Activated T-helper 1 cell treated with anti-CD3 and anti-CD28 coated beads, Interleukin-12 subunit alpha, Interleukin-12 subunit beta, Interleukin-2, Interleukin-4 antibody, amounts not matched to agents 30 ng/mL and 10 ng/mL and 1 ng/mL, durations not matched to agents 14 hours and 24 hours and 36 hours (primary cell): ENCODE measurements at regions of chr5 and their contacts with region 1.

Region 1: GRCh38 chr5:143824851-143825720 is 13.1 kb downstream of the HMHB1 start:
- DNase-seq: peak; percentile 73
- H3K4me3 Mint-ChIP-seq: no peak overlapping the region
- H3K27ac Mint-ChIP-seq: no peak overlapping the region
- H3K4me1 Mint-ChIP-seq: peaks cover 14% of the 10 kb centered on the region
- H3K27me3 Mint-ChIP-seq: peaks cover 1% of the 10 kb centered on the region

Region 2: DNA sequence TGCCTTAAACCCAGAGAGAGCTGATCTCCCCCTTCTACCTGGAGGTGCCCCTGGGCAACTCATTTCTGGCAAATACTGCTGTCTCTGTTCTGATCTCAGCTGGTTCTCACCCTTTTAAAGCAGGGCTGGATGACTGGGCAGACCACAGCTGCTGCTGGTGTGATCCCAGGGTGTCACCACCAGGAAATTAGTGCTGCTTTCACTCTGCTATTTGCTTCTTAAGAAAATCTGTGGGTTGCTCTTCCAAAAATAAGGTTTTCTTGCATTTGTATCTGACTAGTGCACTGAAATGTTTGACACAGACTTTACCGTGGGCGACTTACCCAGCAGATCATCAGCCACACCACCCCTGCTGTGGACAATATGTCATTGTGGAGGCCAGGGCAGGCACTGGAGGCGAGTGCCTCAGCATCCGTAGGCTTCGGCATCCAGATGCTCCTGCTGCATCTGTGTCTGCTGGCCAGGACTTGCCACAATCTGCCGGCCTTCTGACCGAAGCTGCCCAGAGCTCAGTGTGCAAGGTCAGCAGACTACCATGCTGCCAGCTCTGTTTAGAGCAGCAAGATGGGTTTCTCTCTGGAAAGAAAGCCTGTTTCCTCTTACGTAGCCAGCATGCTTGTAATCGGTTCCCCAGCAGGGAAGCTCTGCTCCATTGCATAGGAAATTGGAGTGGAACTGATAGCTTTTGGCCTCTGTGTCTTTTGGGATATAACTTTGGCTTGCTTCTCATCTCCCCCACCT is 1041.3 kb before region 1 on chr5:
- intact Hi-C with region 1: loop called (anchors 5 kb)
- DNase-seq: peak; percentile 57
- H3K4me3 Mint-ChIP-seq: peak overlapping the region; percentile 32
- H3K27ac Mint-ChIP-seq: peak overlapping the region; percentile 62
- H3K4me1 Mint-ChIP-seq: peaks cover 63% of the 10 kb centered on the region
- H3K27me3 Mint-ChIP-seq: no peaks in the 10 kb centered on the region

Region 3: GRCh38 chr5:143057580-143057999 is 767.5 kb before region 1 on chr5:
- intact Hi-C with region 1: loop called (anchors 1 kb)
- DNase-seq: no peak
- H3K4me3 Mint-ChIP-seq: no peak overlapping the region
- H3K27ac Mint-ChIP-seq: peak overlapping the region; percentile 97
- H3K4me1 Mint-ChIP-seq: peaks cover 77% of the 10 kb centered on the region
- H3K27me3 Mint-ChIP-seq: no peaks in the 10 kb centered on the region

Region 4: GRCh38 chr5:143314659-143315058 is 510.4 kb before region 1 on chr5:
- intact Hi-C with region 1: loop called (anchors 10 kb)
- DNase-seq: no peak
- H3K4me3 Mint-ChIP-seq: no peak overlapping the region
- H3K27ac Mint-ChIP-seq: peak overlapping the region; percentile 29
- H3K4me1 Mint-ChIP-seq: peaks cover 41% of the 10 kb centered on the region
- H3K27me3 Mint-ChIP-seq: no peaks in the 10 kb centered on the region

Region 5: DNA sequence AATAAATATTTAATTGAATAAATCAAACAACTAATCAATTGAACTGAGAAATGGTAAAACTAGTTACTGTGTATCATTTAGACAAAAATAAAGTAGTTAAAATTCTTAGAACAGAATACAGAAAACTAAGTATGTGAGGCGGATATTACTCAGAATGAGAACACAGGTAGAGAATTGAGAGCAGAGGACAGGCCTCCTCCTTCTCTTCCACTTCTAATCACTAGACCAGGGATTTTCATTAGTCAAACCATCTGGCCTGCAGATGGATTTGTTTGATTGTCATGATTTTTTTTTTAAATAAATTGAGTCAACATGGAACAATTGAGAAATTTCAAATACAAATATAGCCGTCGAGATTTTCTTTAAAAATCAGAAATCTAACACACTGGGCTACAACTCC is 211.8 kb before region 1 on chr5:
- intact Hi-C with region 1: no loop called
- DNase-seq: no peak
- H3K4me3 Mint-ChIP-seq: no peak overlapping the region
- H3K27ac Mint-ChIP-seq: no peak overlapping the region
- H3K4me1 Mint-ChIP-seq: peaks cover 5% of the 10 kb centered on the region
- H3K27me3 Mint-ChIP-seq: peaks cover 7% of the 10 kb centered on the region

Region 6: DNA sequence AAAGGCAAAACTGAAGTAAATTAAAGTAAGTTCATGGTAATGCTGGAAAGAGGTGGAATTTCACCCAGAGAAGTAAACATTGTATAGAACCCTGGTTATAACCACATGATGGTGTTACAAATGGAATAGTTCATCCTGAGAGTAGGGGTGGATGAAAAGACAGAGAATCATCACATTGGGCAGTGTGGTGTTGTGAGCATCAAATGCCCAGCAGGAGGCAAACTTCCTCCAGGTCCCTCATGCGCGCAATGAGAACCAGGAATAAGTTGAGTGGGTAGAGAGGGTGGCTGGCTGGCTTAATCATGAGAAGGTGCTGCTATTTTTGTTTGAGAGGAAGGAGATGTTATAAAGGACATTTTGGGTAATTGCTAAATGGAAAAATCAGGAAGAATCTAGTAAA is 176.4 kb before region 1 on chr5:
- intact Hi-C with region 1: loop called (anchors 1 kb)
- DNase-seq: no peak
- H3K4me3 Mint-ChIP-seq: no peak overlapping the region
- H3K27ac Mint-ChIP-seq: no peak overlapping the region
- H3K4me1 Mint-ChIP-seq: peaks cover 6% of the 10 kb centered on the region
- H3K27me3 Mint-ChIP-seq: no peaks in the 10 kb centered on the region

Region 7: DNA sequence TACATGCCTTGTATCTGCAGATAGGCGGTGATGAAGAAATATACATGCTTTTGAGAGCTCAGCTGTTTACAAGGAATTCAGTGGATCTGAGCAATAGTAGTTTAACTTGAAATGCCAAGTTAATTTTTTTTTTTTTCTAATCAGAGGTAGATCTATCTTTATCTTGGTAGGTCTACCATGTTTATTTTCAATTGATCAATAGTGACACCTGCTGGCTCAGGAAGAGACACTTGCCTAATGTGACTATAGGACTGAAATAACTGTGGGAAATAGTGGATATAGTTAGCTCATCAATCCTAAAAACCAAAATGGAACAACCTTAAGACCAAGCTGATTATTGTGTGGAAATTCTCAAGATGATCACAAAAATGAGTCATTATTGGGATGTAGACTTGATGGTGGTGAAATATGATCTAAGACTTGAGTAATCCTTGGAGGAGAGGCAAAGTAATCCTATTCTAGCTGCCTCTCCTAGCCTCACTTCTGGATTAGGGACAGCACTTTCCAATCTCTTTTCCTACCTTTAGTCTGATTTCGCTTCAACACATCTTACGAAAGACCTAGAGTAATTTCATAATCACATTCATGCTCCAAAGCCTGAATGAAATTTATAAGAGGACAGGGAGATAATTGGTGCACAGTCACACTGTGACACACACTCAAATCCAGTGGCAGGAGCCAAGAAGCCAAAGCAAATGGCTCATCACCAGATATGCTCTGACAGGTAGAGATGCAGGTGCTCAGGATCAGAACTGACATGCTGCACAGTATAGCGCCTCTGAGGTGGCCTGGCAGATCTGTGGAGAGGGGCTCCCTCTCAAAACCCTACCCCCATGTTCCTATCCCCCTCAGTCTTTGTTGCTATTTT is 143.2 kb after region 1 on chr5:
- intact Hi-C with region 1: loop called (anchors 1 kb)
- DNase-seq: no peak
- H3K4me3 Mint-ChIP-seq: no peak overlapping the region
- H3K27ac Mint-ChIP-seq: no peak overlapping the region
- H3K4me1 Mint-ChIP-seq: no peaks in the 10 kb centered on the region
- H3K27me3 Mint-ChIP-seq: peaks cover 17% of the 10 kb centered on the region

Region 8: DNA sequence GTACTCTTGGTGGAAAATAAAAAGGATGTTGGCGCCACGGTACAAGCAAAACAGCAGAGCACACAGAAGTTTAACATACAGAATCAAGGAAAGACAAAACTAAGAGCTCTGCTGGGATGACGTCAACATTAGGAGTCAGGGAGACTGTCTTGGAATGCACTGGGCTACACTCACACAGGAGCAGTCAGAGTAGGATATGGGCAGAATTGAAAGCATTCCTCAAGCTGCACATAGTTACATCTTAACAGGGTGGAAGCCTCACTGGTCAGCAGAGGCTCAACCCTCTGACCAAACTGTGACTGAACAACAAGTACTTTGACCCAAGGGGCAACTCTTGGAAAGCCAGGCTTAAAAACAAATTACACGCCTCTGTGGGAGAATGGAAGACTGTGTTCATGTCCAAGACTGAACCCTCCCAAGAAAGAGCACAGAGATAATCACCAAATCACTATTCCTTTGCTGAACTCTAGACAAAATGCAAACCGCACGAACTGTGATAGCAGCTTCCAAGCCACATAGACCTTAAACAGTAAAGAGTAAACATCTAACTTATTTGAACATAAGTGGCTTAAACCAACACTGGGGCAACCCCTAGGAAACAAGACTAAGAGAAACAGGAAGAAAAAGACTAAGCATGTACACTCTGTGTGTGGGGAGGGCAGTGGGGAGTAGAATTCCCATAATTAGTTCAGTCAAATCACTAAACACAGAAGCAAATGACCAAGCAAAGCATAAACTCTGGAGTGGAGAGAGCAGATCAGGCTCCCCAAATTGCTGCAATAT is 1237.4 kb after region 1 on chr5:
- intact Hi-C with region 1: no loop called
- DNase-seq: no peak
- H3K4me3 Mint-ChIP-seq: no peak overlapping the region
- H3K27ac Mint-ChIP-seq: no peak overlapping the region
- H3K4me1 Mint-ChIP-seq: no peaks in the 10 kb centered on the region
- H3K27me3 Mint-ChIP-seq: no peaks in the 10 kb centered on the region